HCT116 (cell line): ENCODE measurements at regions of chr5 and their contacts with region 1.

Region 1: DNA sequence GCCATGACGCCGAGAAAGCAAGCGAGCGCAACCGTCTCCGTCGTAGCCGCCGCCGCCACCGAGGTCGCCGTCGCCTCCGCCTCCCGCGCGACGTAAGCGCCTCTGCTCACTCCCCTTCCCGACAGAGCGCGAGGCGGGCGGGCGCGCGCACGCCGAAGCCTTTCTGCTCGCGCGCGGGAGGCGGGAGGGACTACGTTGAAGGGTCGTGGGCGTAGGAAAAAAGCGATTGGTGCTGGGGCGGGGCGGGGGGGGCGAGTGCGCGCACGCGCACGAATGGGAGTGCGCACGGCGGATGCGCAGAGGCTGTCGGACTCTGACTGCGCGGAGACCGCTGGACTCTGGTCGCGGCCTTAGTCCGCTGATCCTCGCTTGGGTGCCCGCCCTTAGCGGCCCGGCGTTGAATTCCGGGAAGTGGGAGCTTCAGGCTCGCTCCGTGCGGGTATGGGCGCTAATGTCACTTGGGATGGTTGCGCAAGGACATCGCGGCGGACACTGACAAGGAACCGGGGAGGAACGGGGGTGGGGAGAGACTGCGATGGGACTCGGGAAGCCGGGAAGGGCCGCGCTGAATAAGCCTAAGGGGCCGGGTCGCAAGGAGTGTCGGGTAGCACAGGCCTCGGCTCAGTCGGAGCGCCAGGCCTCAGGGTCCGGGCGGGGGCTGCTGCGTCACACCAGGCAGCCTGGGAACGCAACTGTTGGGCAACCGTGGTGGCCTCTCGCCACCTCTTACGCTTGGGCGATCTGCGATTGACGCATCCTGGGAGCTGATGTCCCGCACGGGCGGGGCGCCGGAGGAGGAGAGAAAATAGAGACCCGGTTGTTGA is at the start of gene CHD1:
- DNase-seq: peak; percentile 91
- ATAC-seq: peak; percentile 77
- H3K4me3 ChIP-seq: peak within 1 kb of the TSS; percentile 83 to 88
- H3K27ac ChIP-seq: peak within 1 kb of the TSS; percentile 95
- H3K4me1 ChIP-seq: peaks cover 12 to 22% of the 10 kb centered on the region in 2 experiments
- H3K27me3 ChIP-seq: no peaks in the 10 kb centered on the region
- CTCF ChIP-seq: no peak
- POLR2A ChIP-seq: peak; percentile 65
- RAD21 ChIP-seq: no peak
- total RNA-seq, gene CHD1: 43.9 TPM

Region 2: GRCh38 chr5:99019812-99020697 is 91.0 kb after region 1 on chr5:
- CTCF ChIA-PET with region 1: no interaction called
- POLR2A ChIA-PET with region 1: no interaction called
- RAD21 ChIA-PET with region 1: no interaction called
- intact Hi-C with region 1: loop called (anchors 2 kb)
- DNase-seq: peak; percentile 65
- ATAC-seq: peak; percentile 82
- H3K4me3 ChIP-seq: peak overlapping the region in 1 of 2 experiments; percentile 3; a peak in 1 of 4 replicates
- H3K27ac ChIP-seq: peak overlapping the region; percentile 20
- H3K4me1 ChIP-seq: peaks cover 18 to 23% of the 10 kb centered on the region in 2 experiments
- H3K27me3 ChIP-seq: no peaks in the 10 kb centered on the region
- CTCF ChIP-seq: no peak
- POLR2A ChIP-seq: no peak
- RAD21 ChIP-seq: 0 out of 2 replicates have a peak, but pooled peaks have one; percentile 1